GM12878 (cell line): ENCODE measurements at regions of chr16 and their contacts with region 1.

Region 1: DNA sequence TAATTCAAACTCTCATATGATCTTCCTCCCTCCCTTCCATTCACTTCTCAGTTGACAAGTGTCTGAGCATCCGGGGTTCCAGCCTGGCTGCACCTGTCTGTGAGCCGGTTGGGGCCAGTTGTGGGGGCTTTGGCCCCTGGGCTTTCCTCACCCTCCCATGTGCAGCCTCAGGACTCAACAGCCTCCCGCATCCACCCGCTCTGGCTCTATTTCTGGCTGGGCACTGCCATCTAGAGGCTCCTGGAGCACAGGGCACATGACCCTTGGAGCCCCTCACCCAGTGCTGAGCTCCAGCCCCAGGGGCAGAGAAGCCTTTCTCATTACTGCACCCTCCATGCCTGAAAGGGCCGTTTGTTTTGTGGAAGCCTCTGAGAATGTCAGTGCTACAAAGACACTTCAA is 43.3 kb downstream of the HAPSTR1 start:
- DNase-seq: no peak
- ATAC-seq: peak; percentile 83
- H3K4me3 ChIP-seq: no peak overlapping the region
- H3K27ac ChIP-seq: no peak overlapping the region
- H3K4me1 ChIP-seq: peaks cover 34% of the 10 kb centered on the region
- H3K27me3 ChIP-seq: no peaks in the 10 kb centered on the region
- CTCF ChIP-seq: peak; percentile 82 to 92 (median 84)
- EP300 ChIP-seq: no peak
- POLR2A ChIP-seq: no peak
- RAD21 ChIP-seq: peak; percentile 93

Region 2: GRCh38 chr16:8572919-8573724 is 561.6 kb before region 1 on chr16:
- CTCF ChIA-PET with region 1: interaction called, 17 read pairs
- POLR2A ChIA-PET with region 1: no interaction called
- RAD21 ChIA-PET with region 1: interaction called, 8 read pairs
- SMC1A ChIA-PET with region 1: interaction called, 4 read pairs
- in situ Hi-C with region 1: loop called (anchors 5 kb)
- intact Hi-C with region 1: no loop called
- DNase-seq: no peak
- ATAC-seq: peak; percentile 56
- H3K4me3 ChIP-seq: no peak overlapping the region
- H3K27ac ChIP-seq: no peak overlapping the region
- H3K4me1 ChIP-seq: no peaks in the 10 kb centered on the region
- H3K27me3 ChIP-seq: no peaks in the 10 kb centered on the region; a peak in 2 of 4 replicates
- CTCF ChIP-seq: peak; percentile 39 to 64 (median 54); a peak in 5 of 6 replicates
- EP300 ChIP-seq: no peak
- POLR2A ChIP-seq: no peak
- RAD21 ChIP-seq: peak; percentile 86

Region 3: DNA sequence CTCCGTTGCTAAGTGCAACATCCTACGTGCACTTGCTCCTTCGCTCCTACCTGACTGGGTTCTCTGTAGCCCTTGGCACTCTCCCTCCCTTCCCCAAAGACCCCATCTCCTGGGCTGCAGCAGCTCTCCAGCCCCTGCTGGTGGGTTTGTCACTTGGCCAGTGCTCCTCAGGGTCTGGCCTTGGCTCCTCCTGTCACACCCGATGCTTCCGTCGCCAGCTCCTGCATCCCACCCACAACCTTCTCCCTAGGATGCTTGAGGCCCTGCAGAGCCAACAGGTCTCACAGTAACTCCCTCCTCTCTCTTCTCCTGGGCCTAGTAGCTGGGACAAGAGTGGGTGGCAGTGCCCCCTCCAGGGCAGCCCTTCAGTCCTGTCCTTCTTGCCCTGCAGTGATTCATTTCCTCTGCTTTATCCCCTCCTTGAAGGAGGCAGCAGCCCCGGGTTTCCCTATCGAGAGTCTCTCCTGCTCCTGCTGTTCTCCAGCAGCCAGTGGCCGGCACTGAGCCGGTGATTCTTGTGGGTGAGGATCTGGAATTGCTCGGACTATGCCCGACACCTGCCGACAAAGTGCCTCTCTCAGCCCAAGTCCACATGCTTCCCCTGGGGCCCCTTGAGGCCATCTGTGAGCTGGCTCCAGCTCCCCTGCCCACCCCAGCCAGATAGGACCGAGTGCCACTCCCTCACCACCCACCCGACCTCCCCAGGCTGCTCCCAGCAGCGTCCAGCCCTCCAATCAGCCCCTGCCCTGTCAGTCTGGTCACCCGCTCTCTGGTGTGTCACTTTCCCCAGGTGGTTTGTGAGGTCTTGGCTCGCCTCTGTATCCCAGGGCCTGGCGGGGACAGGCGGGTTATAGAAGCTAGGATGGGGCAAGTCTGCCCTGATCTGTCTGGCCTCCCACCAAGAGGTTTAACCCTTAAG is 248.8 kb before region 1 on chr16:
- CTCF ChIA-PET with region 1: interaction called, 35 read pairs
- POLR2A ChIA-PET with region 1: no interaction called
- RAD21 ChIA-PET with region 1: interaction called, 30 read pairs
- SMC1A ChIA-PET with region 1: interaction called, 28 read pairs
- in situ Hi-C with region 1: no loop called
- intact Hi-C with region 1: loop called (anchors 1 kb)
- DNase-seq: no peak
- ATAC-seq: peak; percentile 34
- H3K4me3 ChIP-seq: no peak overlapping the region
- H3K27ac ChIP-seq: no peak overlapping the region
- H3K4me1 ChIP-seq: peaks cover 14% of the 10 kb centered on the region
- H3K27me3 ChIP-seq: no peaks in the 10 kb centered on the region
- CTCF ChIP-seq: no peak
- EP300 ChIP-seq: no peak
- POLR2A ChIP-seq: peak; percentile 48
- RAD21 ChIP-seq: no peak

Region 4: DNA sequence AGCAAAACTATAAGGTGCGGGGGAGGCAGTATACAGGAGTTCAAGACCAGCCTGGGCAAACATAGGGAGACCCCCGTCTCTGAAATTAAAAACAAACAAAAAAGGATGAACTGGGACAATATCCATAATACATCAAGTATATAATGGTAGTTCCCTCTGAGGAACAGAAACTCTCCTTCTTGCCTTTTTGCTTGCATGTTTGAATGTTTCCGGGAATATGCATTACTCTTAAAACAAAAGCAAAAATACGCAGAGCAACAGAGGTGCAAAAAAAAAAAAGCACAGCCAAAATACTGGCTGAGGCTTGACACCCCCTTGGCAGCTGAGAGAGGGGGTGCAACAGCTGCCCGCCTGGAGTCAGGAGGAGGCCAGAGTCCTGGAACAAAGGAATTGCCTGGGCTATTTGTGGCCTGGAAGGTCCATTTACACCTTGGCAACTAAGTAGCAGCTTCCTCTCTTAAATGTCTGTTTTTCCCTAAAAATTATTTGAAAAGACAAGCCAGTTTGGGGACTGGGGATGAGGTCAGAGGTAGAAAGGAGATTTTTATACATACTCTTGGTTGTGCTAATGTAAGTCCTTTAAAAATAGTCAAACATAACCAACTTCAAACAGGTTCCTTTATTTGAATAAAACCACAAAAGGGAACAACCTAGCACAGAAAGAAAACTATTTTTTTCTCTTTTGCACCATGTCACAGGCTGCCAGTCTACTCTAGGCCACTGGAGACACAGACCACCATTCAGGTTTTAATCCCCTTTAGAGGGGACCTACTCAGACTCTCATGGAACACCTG is 190.6 kb before region 1 on chr16:
- CTCF ChIA-PET with region 1: interaction called, 5 read pairs
- POLR2A ChIA-PET with region 1: no interaction called
- RAD21 ChIA-PET with region 1: interaction called, 3 read pairs
- SMC1A ChIA-PET with region 1: interaction called, 3 read pairs
- in situ Hi-C with region 1: loop called (anchors 5 kb)
- intact Hi-C with region 1: no loop called
- DNase-seq: peak; percentile 58
- ATAC-seq: peak; percentile 82
- H3K4me3 ChIP-seq: peak overlapping the region; percentile 68
- H3K27ac ChIP-seq: peak overlapping the region; percentile 63
- H3K4me1 ChIP-seq: peaks cover 73% of the 10 kb centered on the region
- H3K27me3 ChIP-seq: no peaks in the 10 kb centered on the region
- CTCF ChIP-seq: no peak
- EP300 ChIP-seq: 0 out of 4 replicates have a peak, but pooled peaks of 1 of the 2 experiments have one; percentile 29
- POLR2A ChIP-seq: no peak
- RAD21 ChIP-seq: no peak

Region 5: DNA sequence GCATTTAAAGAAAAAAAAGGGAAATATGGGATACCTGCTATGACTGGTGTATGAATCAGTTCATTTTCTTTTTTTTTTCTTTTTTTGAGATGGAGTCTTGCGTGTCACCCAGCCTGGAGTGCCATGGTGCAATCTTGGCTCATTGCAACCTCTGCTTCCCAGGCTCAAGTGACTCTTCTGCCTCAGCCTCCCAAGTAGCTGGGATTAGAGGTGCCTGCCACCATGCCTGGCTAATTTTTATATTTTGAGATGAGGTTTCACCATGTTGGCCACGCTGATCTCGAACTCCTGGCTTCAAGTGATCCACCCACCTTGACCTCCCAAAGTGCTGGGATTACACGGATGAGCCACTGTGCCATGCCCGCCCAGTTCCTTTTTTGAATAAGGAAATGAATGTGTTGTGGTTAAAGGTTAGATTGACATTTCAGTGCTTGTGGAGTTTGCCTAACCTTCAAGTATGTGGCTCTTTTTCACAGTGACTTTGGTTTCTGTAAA is 35.6 kb before region 1 on chr16:
- CTCF ChIA-PET with region 1: interaction called, 33 read pairs
- POLR2A ChIA-PET with region 1: interaction called, 7 read pairs
- RAD21 ChIA-PET with region 1: interaction called, 3 read pairs
- SMC1A ChIA-PET with region 1: interaction called, 9 read pairs
- in situ Hi-C with region 1: no loop called
- intact Hi-C with region 1: no loop called
- DNase-seq: no peak
- ATAC-seq: peak; percentile 59
- H3K4me3 ChIP-seq: peak overlapping the region; percentile 48; the same call in 1 of the 2 replicates
- H3K27ac ChIP-seq: peak overlapping the region; percentile 15
- H3K4me1 ChIP-seq: peaks cover 18% of the 10 kb centered on the region
- H3K27me3 ChIP-seq: no peaks in the 10 kb centered on the region
- CTCF ChIP-seq: no peak
- EP300 ChIP-seq: no peak
- POLR2A ChIP-seq: no peak
- RAD21 ChIP-seq: no peak

Region 6: DNA sequence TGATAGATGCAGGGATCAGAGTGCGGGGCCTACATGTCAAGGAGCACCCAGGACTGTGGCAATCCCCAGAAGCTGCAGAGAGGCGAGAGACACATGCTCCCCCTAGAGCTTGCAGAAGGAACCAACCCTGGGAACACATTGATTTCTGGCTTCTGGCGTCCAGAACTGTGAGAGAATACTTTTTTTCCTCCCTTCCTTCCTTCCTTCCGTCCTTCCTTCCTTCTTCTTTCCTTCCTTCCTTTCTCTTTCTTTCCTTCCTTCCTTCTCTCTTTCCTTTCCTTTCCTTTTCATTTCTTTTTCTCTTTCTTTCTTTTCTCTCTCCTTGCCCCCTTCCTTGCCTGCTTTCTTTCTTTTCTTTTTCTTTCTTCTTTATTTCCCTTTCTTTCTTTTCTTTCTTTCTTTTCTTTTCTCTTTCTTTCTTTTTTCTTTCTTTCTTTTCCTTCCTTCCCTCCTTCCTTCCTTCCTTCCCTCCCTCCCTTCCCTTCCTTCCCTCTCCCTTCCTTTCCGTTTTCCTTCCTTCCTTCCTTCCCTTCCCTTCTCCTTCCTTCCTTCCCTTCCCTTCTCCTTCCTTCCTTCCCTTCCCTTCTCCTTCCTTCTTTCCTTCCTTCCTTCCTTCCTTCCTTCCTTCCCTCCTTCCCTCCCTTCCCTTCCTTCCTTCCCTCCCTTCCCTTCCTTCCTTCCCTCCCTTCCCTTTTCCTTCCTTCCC is 91.0 kb after region 1 on chr16:
- CTCF ChIA-PET with region 1: interaction called, 17 read pairs
- POLR2A ChIA-PET with region 1: no interaction called
- RAD21 ChIA-PET with region 1: interaction called, 6 read pairs
- SMC1A ChIA-PET with region 1: no interaction called
- in situ Hi-C with region 1: no loop called
- intact Hi-C with region 1: no loop called
- DNase-seq: no peak
- ATAC-seq: peak; percentile 62
- H3K4me3 ChIP-seq: no peak overlapping the region
- H3K27ac ChIP-seq: no peak overlapping the region
- H3K4me1 ChIP-seq: no peaks in the 10 kb centered on the region
- H3K27me3 ChIP-seq: no peaks in the 10 kb centered on the region; a peak in 1 of 4 replicates
- CTCF ChIP-seq: peak; percentile 41 to 54 (median 49); a peak in 3 of 6 replicates
- EP300 ChIP-seq: no peak
- POLR2A ChIP-seq: no peak
- RAD21 ChIP-seq: 0 out of 2 replicates have a peak, but pooled peaks have one; percentile 16

Region 7: GRCh38 chr16:9286930-9287329 is 152.2 kb after region 1 on chr16:
- CTCF ChIA-PET with region 1: no interaction called
- POLR2A ChIA-PET with region 1: no interaction called
- RAD21 ChIA-PET with region 1: no interaction called
- SMC1A ChIA-PET with region 1: no interaction called
- in situ Hi-C with region 1: no loop called
- intact Hi-C with region 1: no loop called
- DNase-seq: no peak
- ATAC-seq: no peak
- H3K4me3 ChIP-seq: no peak overlapping the region
- H3K27ac ChIP-seq: no peak overlapping the region
- H3K4me1 ChIP-seq: no peaks in the 10 kb centered on the region
- H3K27me3 ChIP-seq: no peaks in the 10 kb centered on the region
- CTCF ChIP-seq: no peak
- EP300 ChIP-seq: no peak
- POLR2A ChIP-seq: no peak
- RAD21 ChIP-seq: no peak